ENCODE measurements at regions of chr1 and their contacts with region 1.

Region 1: DNA sequence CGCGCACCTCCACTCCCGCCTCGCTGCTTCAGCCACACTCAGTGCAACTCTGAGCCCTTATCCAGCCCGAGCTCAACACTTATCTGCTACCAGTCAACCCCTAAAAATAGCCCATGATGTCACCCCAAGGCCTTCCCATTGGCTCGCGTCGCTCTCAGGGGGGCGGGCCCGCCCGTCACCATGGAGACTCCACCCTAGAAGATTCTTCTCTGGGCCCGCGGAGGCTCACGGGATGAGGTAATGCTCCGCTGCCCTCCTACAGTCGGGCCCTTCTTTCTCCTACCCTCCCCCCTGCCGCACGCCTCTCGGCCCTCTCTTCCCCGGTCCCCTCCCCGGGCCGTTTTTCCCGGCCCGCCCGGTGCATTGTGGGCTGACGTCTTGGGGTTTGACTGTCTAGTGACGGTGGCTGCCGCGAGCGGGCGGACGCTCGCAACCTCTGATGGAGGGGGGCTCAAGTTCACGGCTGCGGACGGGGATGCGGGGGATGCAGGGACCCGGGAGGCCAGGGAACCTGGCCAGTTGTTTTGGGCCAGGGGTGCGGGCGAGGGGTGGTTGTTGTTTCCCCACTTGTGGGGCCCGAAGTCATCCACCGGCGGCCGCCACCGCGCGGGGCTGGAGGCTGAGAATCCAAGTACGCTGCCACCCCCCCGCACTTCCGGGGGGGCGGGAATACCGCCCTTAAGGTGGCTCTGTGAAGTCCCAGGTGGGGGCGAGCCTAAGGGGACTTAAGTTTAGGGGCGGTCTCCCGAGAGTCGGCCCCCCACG is at the start of gene JUN:
- DNase-seq: peak; percentile 98
- ATAC-seq: peak; percentile 84
- H3K4me3 ChIP-seq: peak within 1 kb of the TSS; percentile 61 to 79
- H3K27ac ChIP-seq: peak within 1 kb of the TSS; percentile 89
- H3K4me1 ChIP-seq: peaks cover 10 to 33% of the 10 kb centered on the region in 2 experiments; a peak in 3 of 4 replicates
- H3K27me3 ChIP-seq: no peaks in the 10 kb centered on the region
- CTCF ChIP-seq: no peak
- POLR2A ChIP-seq: peak; percentile 99
- RAD21 ChIP-seq: no peak; the same call in 1 of the 2 replicates
- total RNA-seq, gene JUN: 18.7 TPM

Region 2: GRCh38 chr1:58816072-58816746 is 32.0 kb after region 1 on chr1:
- CTCF ChIA-PET with region 1: no interaction called
- POLR2A ChIA-PET with region 1: interaction called, 7 read pairs
- RAD21 ChIA-PET with region 1: no interaction called
- intact Hi-C with region 1: loop called (anchors 1 kb)
- DNase-seq: peak; percentile 51
- ATAC-seq: peak; percentile 73
- H3K4me3 ChIP-seq: peak overlapping the region; percentile 53 to 63
- H3K27ac ChIP-seq: peak overlapping the region; percentile 80
- H3K4me1 ChIP-seq: peaks cover 22 to 44% of the 10 kb centered on the region in 2 experiments; a peak in 3 of 4 replicates
- H3K27me3 ChIP-seq: no peaks in the 10 kb centered on the region
- CTCF ChIP-seq: no peak
- POLR2A ChIP-seq: no peak
- RAD21 ChIP-seq: peak; percentile 54

Region 3: DNA sequence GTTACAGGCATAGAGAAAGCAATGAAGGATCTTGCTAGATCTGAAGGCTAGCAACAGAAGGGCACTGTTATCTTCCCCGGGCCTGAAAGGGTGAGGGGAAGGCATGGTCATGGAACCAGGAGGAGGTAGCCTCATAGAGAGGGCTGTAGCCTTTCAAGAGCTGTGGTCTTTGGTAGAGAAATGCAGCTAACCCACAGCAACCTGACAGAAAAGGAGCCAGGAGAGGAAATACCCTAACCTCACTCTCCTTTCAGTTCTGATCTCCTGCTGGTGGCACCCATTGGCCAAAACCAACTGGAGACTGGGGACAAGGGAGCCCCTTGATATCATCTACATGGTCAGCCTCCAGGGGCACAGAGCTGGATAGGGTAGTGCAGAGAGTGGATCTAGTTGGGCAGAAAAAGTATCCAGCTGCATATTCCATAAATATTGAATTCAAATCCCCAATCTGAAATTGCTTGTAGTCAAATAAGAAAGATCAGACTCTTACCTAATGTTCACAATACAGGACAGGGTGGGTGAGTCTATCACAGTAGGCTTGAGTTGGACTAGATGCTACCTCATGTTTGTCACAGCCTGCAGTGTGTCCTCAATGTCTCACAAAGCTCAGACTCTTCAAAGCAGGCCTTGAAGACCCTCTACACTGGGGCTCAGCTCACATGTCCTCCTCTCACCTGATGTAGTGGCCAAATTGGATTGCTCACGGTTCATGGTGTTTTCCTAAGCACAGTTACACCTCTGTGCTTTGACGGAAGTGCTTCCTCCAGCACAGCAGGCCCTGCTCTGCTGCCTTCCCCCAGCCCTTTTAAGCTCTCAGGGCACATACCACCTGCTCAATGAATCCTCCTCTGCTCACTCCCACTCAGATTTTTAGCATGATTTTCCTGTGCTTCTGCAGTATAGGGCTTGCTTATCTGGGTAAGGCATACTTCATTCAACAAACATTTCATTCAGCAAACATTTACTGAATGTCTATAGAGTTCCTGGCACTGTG is 73.8 kb after region 1 on chr1:
- CTCF ChIA-PET with region 1: no interaction called
- POLR2A ChIA-PET with region 1: no interaction called
- RAD21 ChIA-PET with region 1: no interaction called
- intact Hi-C with region 1: no loop called
- DNase-seq: no peak
- ATAC-seq: no peak
- H3K4me3 ChIP-seq: no peak overlapping the region
- H3K27ac ChIP-seq: no peak overlapping the region
- H3K4me1 ChIP-seq: no peaks in the 10 kb centered on the region
- H3K27me3 ChIP-seq: no peaks in the 10 kb centered on the region
- CTCF ChIP-seq: no peak
- POLR2A ChIP-seq: no peak
- RAD21 ChIP-seq: no peak

Region 4: DNA sequence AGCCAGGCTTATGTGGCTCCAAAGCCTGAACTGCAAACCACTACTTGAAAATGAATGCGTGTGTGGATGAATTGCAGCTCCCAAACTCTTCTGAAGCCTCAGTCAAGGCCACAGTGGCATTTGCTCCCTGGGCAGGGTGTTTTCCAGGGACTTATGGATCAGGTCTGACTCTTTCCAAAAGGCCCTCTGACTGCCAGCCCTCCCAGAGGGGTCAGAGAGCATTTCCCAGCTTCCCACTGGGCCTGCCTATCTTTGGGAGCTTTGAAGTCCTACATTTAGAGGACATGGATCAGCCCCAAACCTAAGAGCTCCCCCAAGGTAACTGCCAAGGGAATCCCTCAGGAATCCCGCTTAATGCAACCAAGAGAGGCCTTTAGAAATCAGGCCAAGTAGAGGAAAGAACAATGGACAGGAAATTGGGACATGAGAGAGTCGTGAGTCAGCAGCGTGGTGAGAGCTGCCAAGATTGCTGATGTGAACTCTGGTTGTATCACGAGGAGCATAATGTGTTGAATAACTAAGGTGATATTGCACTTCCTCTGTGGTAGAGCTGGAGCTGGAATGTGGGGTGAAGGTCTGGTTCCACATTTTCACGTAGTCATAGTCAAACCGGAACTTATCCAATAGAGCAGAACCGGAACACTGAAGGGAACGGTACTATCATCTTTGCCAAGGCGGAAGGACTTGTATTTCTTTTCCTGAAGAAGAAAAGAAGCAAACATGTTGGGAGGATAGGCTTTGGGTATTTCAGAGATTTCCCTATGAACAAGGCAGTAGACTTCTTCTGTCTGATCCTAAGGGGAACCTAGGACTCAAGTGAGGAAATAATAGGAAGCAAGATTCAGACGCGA is 99.1 kb after region 1 on chr1:
- CTCF ChIA-PET with region 1: no interaction called
- POLR2A ChIA-PET with region 1: interaction called, 5 read pairs
- RAD21 ChIA-PET with region 1: no interaction called
- intact Hi-C with region 1: loop called (anchors 2 kb)
- DNase-seq: peak; percentile 85
- ATAC-seq: peak; percentile 63
- H3K4me3 ChIP-seq: peak overlapping the region in 1 of 2 experiments; percentile 14; a peak in 2 of 4 replicates
- H3K27ac ChIP-seq: peak overlapping the region; percentile 53
- H3K4me1 ChIP-seq: peaks cover 48 to 56% of the 10 kb centered on the region in 2 experiments
- H3K27me3 ChIP-seq: no peaks in the 10 kb centered on the region
- CTCF ChIP-seq: no peak
- POLR2A ChIP-seq: no peak
- RAD21 ChIP-seq: peak; percentile 34; the same call in 1 of the 2 replicates

Region 5: DNA sequence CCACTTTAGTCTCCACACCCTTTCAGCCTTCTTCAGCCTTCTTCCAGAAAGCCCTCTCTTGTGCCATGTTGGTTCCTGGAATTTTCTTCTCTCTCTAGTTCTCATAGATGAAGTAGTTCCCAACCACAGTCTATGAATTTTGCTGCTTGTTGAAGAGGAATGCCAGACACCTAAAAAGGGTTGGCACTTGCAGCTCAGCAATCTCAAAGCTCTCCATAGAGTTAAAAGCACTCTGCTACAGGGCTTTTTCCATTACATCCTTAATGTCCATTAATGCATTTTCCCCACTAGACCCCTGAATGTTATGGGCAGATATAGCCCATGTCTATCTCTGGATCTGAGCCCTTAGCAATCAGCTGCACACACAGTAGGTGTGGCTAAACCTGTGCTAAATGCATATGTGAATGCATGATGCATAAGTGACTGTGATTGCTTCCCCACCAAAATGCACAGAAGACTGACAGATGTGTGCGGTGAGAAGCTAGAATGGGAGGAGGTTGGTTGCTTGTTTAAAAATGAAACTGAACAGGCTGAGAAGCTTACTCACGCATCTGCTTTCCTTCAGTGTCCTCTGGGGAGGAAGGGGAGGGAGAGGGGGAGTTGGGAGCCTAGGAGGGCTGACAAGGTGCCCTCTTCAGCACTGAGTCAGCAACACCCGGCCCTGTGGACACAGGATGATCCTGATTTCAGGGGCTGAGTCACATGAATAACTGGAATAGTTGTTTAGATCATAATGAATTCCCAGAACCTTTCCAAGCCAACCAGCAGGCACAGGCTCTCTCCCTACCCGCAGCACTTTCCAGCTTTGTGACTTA is 366.6 kb after region 1 on chr1:
- CTCF ChIA-PET with region 1: no interaction called
- POLR2A ChIA-PET with region 1: interaction called, 5 read pairs
- RAD21 ChIA-PET with region 1: no interaction called
- intact Hi-C with region 1: loop called (anchors 2 kb)
- DNase-seq: peak; percentile 56
- ATAC-seq: peak; percentile 82
- H3K4me3 ChIP-seq: peak overlapping the region; percentile 20 to 51
- H3K27ac ChIP-seq: no peak overlapping the region
- H3K4me1 ChIP-seq: peaks cover 10 to 34% of the 10 kb centered on the region in 2 experiments; a peak in 3 of 4 replicates
- H3K27me3 ChIP-seq: no peaks in the 10 kb centered on the region
- CTCF ChIP-seq: no peak
- POLR2A ChIP-seq: no peak
- RAD21 ChIP-seq: peak; percentile 20

Region 6: DNA sequence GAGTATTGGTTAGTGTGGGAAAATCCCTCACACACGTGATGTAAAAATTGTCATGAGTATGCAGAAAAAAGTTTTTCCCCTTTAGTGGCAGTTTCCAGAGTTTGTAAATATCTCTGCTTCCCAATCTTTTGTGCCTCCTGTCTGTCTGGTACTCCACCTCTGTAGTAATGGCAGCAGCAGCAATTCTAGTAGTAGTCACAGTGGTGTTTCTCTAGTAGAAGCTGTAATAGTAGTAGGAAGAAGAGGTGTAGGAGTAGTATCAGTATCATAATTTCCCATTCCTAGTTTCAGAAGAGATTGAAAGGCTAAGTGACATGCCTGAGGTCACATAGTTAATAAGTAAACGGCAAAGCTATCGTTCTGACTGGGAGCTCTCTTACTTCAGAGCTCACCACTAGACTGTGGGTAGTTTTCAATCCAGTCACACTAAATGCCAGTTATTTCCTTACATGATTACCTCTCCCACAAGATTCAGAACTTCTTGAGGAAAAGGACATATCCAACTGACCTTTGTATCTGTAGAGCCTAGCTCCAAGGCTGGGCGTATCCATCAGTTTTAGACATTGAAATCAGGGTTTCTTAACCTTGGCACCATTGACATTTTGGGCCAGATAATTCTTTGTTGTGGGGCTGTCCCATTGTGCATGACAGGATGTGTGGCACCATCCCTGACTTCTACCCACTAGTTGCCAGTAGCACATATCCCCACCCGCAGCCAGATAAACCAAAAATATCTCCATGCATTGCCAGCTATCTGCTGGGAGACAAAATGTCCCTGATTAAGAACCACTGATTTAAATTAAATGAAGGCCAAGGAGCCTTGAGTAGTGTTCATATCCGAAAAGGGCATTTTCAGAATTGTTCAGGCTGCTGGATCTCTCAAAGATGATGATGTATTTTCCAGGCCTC is 648.6 kb after region 1 on chr1:
- CTCF ChIA-PET with region 1: no interaction called
- POLR2A ChIA-PET with region 1: no interaction called
- RAD21 ChIA-PET with region 1: no interaction called
- intact Hi-C with region 1: loop called (anchors 10 kb)
- DNase-seq: no peak
- ATAC-seq: no peak
- H3K4me3 ChIP-seq: no peak overlapping the region
- H3K27ac ChIP-seq: no peak overlapping the region
- H3K4me1 ChIP-seq: peaks cover under 1 to 53% of the 10 kb centered on the region in 2 experiments; a peak in 3 of 4 replicates
- H3K27me3 ChIP-seq: no peaks in the 10 kb centered on the region
- CTCF ChIP-seq: no peak
- POLR2A ChIP-seq: no peak
- RAD21 ChIP-seq: no peak

Measured in HCT116 (cell line).